MCF 10A (cell line): ENCODE measurements at regions of chr7 and their contacts with region 1.

Region 1: DNA sequence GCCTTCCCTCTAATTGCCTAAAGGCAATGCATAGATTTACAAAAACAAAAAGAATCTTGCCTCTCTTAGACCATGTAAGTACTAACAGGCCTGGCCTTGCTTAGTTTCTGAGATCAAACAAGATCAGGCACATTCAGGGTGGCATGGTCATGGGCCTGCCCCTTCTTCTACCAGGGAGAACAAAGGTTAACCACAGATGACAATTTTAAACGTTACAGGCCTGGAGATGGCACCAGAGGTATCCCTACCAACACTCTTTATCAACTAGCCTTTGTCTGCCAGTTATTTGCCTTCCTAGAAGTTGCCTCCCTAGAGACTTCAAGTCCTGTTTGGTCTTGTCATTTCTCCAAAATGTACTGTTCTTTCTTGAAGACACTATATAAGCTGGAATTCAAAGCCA is 252.6 kb downstream of the DOCK4 start:
- DNase-seq: peak; percentile 51
- H3K4me3 Mint-ChIP-seq: no peak overlapping the region
- H3K27ac Mint-ChIP-seq: peak overlapping the region; percentile 67
- H3K4me1 Mint-ChIP-seq: peaks cover 18% of the 10 kb centered on the region
- H3K27me3 Mint-ChIP-seq: no peaks in the 10 kb centered on the region
- CTCF ChIP-seq: peak; percentile 24

Region 2: DNA sequence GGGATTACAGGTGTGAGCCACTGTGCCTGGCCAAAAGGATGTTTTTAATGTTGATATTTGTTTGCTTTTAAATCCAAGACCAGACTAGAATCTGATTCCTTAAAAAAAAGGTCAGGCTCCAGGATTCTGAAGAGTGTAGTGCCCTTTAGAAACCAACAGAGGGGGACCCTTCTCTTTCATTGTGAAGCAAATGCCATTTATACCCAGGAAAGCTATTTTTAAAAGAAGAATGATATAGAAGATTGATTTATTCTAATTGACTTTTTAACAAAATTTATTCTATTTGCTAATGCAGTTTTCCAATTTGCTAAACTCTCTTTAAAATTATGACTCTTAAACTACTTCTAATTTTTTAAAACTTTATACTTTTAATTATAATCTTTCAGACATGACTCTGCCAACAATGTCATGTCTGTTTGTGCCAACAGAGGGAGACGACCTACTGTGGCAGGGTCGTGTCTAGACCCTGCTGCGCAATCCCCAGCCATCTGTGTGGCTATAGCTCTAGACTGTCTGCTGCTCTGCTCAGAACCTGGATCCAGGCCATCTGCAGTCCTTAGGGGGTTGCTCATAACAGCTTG is 190.3 kb before region 1 on chr7:
- CTCF ChIA-PET with region 1: no interaction called
- POLR2A ChIA-PET with region 1: no interaction called
- intact Hi-C with region 1: no loop called
- DNase-seq: peak; percentile 63
- H3K4me3 Mint-ChIP-seq: no peak overlapping the region
- H3K27ac Mint-ChIP-seq: no peak overlapping the region
- H3K4me1 Mint-ChIP-seq: no peaks in the 10 kb centered on the region
- H3K27me3 Mint-ChIP-seq: no peaks in the 10 kb centered on the region
- CTCF ChIP-seq: peak; percentile 50

Region 3: DNA sequence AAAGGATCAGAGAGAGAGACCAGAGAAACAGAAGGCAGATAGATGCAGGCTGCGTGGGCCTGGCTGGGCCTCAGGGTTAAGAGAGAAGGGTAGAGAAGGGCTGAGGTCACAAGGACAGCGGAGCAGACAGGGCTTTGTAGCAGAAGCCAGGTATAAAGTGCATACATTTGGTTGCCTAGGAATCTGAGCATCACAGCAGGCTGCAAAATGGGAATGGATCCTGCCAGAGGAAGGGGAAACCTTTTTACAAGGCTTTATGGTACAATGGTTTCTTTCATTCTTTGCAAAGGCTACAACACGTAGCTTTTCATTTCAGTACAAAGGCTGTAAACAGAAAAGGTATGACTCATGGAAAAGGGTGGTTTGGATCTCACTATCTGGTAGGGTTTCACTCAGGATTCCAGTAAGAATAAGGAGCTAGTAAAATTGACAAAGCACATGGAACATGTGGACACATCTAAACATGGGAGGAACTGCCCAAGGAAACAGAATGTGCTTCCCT is 22.5 kb before region 1 on chr7:
- CTCF ChIA-PET with region 1: interaction called, 10 read pairs
- POLR2A ChIA-PET with region 1: interaction called, 5 read pairs
- intact Hi-C with region 1: no loop called
- DNase-seq: peak; percentile 3
- H3K4me3 Mint-ChIP-seq: no peak overlapping the region
- H3K27ac Mint-ChIP-seq: no peak overlapping the region
- H3K4me1 Mint-ChIP-seq: peaks cover 13% of the 10 kb centered on the region
- H3K27me3 Mint-ChIP-seq: no peaks in the 10 kb centered on the region
- CTCF ChIP-seq: no peak

Region 4: DNA sequence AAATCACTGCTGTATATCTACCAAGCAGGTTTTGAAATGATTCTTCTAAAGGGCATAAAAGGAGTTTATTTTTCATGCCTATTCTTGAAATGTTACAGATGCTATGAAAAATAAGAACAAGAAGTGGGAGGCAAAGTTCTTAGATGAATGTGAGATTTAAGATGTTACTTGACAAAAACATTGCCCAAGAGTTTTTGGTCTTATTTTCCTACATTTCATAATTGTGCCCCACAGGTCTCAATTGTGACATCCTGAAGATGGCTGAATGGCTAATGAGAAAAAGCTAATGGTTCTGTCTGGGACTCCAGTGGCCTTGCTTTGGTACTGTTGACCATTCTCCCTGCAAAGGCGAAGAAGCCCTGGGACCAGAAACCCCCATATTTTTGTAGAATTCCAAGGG is 453.6 kb after region 1 on chr7:
- CTCF ChIA-PET with region 1: interaction called, 14 read pairs
- POLR2A ChIA-PET with region 1: no interaction called
- intact Hi-C with region 1: no loop called
- DNase-seq: no peak
- H3K4me3 Mint-ChIP-seq: no peak overlapping the region
- H3K27ac Mint-ChIP-seq: no peak overlapping the region
- H3K4me1 Mint-ChIP-seq: peaks cover 12% of the 10 kb centered on the region
- H3K27me3 Mint-ChIP-seq: no peaks in the 10 kb centered on the region
- CTCF ChIP-seq: no peak